ENCODE measurements at regions of chr6 and their contacts with region 1.

Region 1: GRCh38 chr6:134161036-134161435 is 108.6 kb upstream of the SLC2A12 start:
- DNase-seq: no peak
- H3K4me3 ChIP-seq: no peak overlapping the region
- H3K27ac ChIP-seq: no peak overlapping the region
- H3K4me1 ChIP-seq: no peaks in the 10 kb centered on the region
- CTCF ChIP-seq: no peak

Region 2: DNA sequence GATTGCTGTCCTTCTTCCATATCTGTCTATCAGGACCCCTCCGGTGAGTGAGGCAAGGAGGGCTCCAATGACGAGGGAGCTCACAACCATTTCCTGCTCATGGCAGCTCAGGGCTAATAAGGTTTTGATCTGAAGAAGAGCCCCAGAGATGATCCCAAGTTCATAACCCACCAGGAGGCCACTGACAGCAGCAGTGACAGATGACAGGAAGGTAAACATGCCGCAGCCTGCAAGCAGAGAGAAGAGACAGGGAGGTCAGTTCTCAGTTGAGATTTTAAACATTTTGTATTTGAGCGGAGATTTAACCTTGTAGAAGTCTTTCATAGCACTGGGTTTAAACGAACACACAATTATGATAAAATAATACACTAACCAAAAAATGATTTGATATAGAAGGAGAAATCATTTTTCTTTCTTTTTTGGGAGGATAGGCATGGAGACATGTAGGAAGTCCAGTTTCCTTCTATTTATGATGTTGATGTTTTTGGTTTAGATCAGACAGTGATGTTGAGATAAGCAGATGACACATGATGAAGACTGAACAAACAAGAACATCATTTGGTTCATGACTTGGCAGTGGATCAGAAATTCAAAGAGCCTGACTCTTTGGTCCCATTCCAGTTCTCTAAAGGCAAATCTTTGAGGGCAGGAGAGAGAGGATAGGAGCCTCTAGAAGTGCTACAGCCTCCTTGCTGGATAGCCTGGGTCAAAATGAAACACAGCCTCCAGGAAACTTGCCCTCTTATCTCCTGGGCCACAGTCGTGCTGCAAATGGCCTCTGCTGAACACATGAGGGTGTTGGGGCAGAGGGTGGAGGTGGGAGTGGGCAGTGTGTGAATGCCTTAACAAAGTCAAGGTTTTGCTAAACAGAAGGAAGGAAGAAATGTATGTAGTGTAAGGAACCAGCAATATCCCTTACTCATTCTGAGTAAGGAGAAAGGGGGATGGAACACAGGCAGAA is 131.3 kb before region 1 on chr6:
- CTCF ChIA-PET with region 1: no interaction called
- POLR2A ChIA-PET with region 1: no interaction called
- intact Hi-C with region 1: no loop called
- DNase-seq: no peak
- H3K4me3 ChIP-seq: no peak overlapping the region
- H3K27ac ChIP-seq: no peak overlapping the region
- H3K4me1 ChIP-seq: peaks cover 3% of the 10 kb centered on the region
- CTCF ChIP-seq: no peak

Region 3: GRCh38 chr6:134822920-134823709 is 662.1 kb after region 1 on chr6:
- CTCF ChIA-PET with region 1: no interaction called
- POLR2A ChIA-PET with region 1: interaction called, 3 read pairs
- intact Hi-C with region 1: loop called (anchors 5 kb)
- DNase-seq: peak; percentile 65
- H3K4me3 ChIP-seq: no peak overlapping the region
- H3K27ac ChIP-seq: no peak overlapping the region
- H3K4me1 ChIP-seq: peaks cover 12% of the 10 kb centered on the region
- CTCF ChIP-seq: peak; percentile 82

Region 4: DNA sequence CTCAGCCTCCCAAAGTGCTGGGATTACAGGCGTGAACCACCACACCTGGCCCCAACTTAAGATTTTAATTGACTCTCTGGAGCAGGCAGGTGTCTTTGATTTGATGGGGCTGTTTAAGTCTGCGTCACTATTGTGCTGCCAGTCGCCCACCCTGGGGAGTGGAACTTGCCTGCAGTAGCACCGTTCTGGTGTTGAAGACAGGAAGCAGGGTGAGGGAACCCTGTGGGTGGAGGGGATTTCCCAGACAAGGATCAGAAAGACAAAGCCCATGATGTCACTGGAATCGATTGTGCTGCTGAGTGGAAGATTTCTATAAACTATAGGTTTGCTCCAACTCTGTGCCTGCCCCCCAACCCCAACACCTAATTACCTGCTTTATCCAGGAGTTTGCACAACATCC is 777.9 kb after region 1 on chr6:
- CTCF ChIA-PET with region 1: no interaction called
- POLR2A ChIA-PET with region 1: interaction called, 3 read pairs
- intact Hi-C with region 1: loop called (anchors 2 kb)
- DNase-seq: peak; percentile 24
- H3K4me3 ChIP-seq: no peak overlapping the region
- H3K27ac ChIP-seq: no peak overlapping the region
- H3K4me1 ChIP-seq: no peaks in the 10 kb centered on the region
- CTCF ChIP-seq: no peak